ENCODE measurements at regions of chr10 and their contacts with region 1.

Region 1: GRCh38 chr10:43689955-43690771 is 41.5 kb upstream of the ZNF32 start:
- DNase-seq: peak; percentile 96
- H3K4me3 ChIP-seq: peak overlapping the region; percentile 46 to 68
- H3K27ac ChIP-seq: peak overlapping the region in 1 of 2 experiments; percentile 12; a peak in 1 of 4 replicates
- H3K4me1 ChIP-seq: peaks cover 0 to 10% of the 10 kb centered on the region in 2 experiments; a peak in 1 of 4 replicates
- H3K27me3 ChIP-seq: no peaks in the 10 kb centered on the region
- CTCF ChIP-seq: peak; percentile 78
- EP300 ChIP-seq: no peak
- RAD21 ChIP-seq: peak; percentile 80

Region 2: GRCh38 chr10:43671656-43672531 is 18.3 kb before region 1 on chr10:
- CTCF ChIA-PET with region 1: interaction called, 32 read pairs
- POLR2A ChIA-PET with region 1: no interaction called
- DNase-seq: peak; percentile 78
- H3K4me3 ChIP-seq: no peak overlapping the region
- H3K27ac ChIP-seq: no peak overlapping the region
- H3K4me1 ChIP-seq: no peaks in the 10 kb centered on the region; a peak in 1 of 4 replicates
- H3K27me3 ChIP-seq: no peaks in the 10 kb centered on the region; the same call in 1 of the 2 replicates
- CTCF ChIP-seq: peak; percentile 81
- EP300 ChIP-seq: no peak
- RAD21 ChIP-seq: peak; percentile 97

Region 3: DNA sequence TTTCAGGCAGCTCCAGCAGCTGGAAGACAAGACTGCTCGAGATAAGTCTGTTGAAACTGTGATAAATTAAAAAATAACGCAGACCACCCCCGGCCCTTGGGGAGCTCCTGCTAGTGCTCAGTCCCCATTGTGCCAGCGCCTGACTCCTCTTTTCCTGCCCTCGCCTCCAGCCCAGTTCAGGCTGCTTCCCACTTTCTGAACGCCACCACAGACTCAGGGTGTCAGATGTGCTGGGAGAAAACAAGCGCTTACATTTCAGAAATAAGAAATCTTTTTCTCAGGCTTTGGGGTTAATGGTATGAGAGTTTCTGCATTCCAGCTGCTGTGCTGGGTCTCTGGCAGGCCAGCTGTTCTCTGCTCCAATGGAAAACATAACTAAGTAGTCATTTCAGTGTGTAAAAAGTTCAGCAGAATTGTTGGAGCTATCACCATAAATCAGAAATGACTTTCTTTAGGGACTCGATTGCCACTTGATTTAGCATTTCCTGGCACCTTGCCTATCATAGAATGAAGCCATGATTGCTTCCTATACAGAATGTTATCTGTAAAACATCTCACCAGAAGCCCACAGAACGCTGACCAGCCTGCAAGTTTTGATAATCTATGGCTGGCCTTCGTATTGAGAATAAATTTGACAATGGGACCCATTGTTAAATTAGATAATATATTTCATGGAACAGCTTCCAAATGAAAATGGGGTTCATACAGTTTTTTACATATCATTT is 215.5 kb after region 1 on chr10:
- CTCF ChIA-PET with region 1: interaction called, 18 read pairs
- POLR2A ChIA-PET with region 1: no interaction called
- DNase-seq: peak; percentile 51
- H3K4me3 ChIP-seq: no peak overlapping the region
- H3K27ac ChIP-seq: no peak overlapping the region
- H3K4me1 ChIP-seq: peaks cover 0 to 19% of the 10 kb centered on the region in 2 experiments; a peak in 1 of 4 replicates
- H3K27me3 ChIP-seq: no peaks in the 10 kb centered on the region
- CTCF ChIP-seq: no peak
- EP300 ChIP-seq: peak in 1 of 2 experiments; percentile 46; a peak in 1 of 4 replicates
- RAD21 ChIP-seq: peak; percentile 3; the same call in 1 of the 2 replicates

Region 4: DNA sequence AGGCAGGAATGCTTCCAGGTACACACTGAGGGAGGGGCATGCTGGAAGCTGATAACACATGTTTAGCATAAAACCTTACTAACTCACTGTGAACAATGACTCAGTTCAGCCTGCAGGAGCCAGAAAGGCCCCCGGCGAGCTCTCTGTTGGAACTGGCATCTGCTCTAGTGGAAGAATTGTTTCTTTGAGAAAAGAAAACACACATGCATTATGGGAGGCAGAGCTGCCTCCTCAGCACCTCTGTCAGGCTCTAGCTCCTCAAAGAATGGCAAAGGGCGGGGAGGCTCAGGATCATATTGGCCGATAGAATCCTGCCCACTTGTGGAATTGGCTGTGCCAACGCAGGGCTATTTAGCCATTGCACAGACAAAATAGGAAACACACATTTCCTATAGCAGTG is 356.4 kb after region 1 on chr10:
- CTCF ChIA-PET with region 1: interaction called, 41 read pairs
- POLR2A ChIA-PET with region 1: no interaction called
- DNase-seq: no peak
- H3K4me3 ChIP-seq: no peak overlapping the region
- H3K27ac ChIP-seq: no peak overlapping the region
- H3K4me1 ChIP-seq: peaks cover 0 to 31% of the 10 kb centered on the region in 2 experiments; a peak in 2 of 4 replicates
- H3K27me3 ChIP-seq: no peaks in the 10 kb centered on the region
- CTCF ChIP-seq: no peak
- EP300 ChIP-seq: no peak
- RAD21 ChIP-seq: no peak

Region 5: DNA sequence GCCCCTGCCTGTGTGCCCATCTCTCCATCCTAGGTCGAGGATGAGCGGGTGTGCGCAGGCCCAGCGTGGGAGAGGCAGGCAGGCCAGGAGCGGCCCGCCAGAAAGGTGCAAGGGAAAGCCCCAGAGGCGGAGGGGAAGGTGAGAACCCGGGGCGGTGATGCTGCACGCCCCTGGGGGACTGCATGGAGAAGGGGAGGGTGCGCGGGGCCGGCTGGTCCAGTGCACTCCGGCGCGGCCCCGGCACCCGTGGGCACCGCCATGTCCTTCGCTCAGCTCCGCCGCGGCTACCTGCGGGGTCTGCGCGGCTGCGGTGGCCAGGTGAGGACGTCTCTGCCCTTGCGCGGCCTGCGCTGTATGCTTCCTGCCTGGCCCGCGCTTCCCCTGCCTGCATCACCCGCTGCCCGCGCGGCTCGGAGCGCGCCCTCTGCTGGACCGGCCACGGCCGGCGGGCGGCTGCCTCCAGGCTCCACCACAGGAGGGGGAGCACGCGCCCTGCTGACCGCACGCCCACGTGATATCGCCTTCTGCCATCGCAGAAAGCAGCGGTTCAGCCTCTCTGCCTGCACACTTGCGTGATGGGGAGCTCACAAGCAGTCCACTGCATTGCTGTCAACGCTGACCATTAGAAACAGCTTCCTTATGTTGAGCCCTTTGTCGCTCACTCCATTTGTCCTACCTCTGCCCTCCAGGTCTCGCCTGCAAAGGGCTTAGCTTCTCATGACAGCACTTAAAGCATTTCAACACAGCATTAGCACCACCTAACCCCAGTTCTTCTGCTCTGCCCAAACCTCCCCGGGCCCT is 620.8 kb after region 1 on chr10:
- CTCF ChIA-PET with region 1: interaction called, 97 read pairs
- POLR2A ChIA-PET with region 1: no interaction called
- DNase-seq: peak; percentile 93
- H3K4me3 ChIP-seq: no peak overlapping the region; a peak in 2 of 4 replicates
- H3K27ac ChIP-seq: no peak overlapping the region
- H3K4me1 ChIP-seq: peaks cover 0 to 30% of the 10 kb centered on the region in 2 experiments; a peak in 1 of 4 replicates
- H3K27me3 ChIP-seq: no peaks in the 10 kb centered on the region
- CTCF ChIP-seq: peak; percentile 62
- EP300 ChIP-seq: no peak
- RAD21 ChIP-seq: peak; percentile 74

Region 6: GRCh38 chr10:44386546-44387052 is 696.4 kb after region 1 on chr10:
- CTCF ChIA-PET with region 1: interaction called, 117 read pairs
- POLR2A ChIA-PET with region 1: interaction called, 7 read pairs
- DNase-seq: peak; percentile 95
- H3K4me3 ChIP-seq: peak overlapping the region in 1 of 2 experiments; percentile 49; a peak in 1 of 4 replicates
- H3K27ac ChIP-seq: no peak overlapping the region
- H3K4me1 ChIP-seq: no peaks in the 10 kb centered on the region; a peak in 1 of 4 replicates
- H3K27me3 ChIP-seq: peaks cover 11% of the 10 kb centered on the region; the same call in 1 of the 2 replicates
- CTCF ChIP-seq: peak; percentile 79
- EP300 ChIP-seq: no peak
- RAD21 ChIP-seq: peak; percentile 91

Region 7: GRCh38 chr10:45000752-45001380 is 1310.7 kb after region 1 on chr10 and contains the start of gene ZNF22:
- CTCF ChIA-PET with region 1: no interaction called
- POLR2A ChIA-PET with region 1: no interaction called
- DNase-seq: peak; percentile 91
- H3K4me3 ChIP-seq: peak within 1 kb of the TSS; percentile 71
- H3K27ac ChIP-seq: peak within 1 kb of the TSS; percentile 76 to 92
- H3K4me1 ChIP-seq: peaks cover 8 to 12% of the 10 kb centered on the region in 2 experiments; a peak in 3 of 4 replicates
- H3K27me3 ChIP-seq: no peaks in the 10 kb centered on the region
- CTCF ChIP-seq: no peak
- EP300 ChIP-seq: peak in 1 of 2 experiments; percentile 24; a peak in 1 of 4 replicates
- RAD21 ChIP-seq: no peak
- polyA plus RNA-seq, gene ZNF22: 10.2 and 13.2 TPM in 2 replicates

Measured in SK-N-SH (cell line).